ENCODE measurements at regions of chr4 and their contacts with region 1.

Region 1: DNA sequence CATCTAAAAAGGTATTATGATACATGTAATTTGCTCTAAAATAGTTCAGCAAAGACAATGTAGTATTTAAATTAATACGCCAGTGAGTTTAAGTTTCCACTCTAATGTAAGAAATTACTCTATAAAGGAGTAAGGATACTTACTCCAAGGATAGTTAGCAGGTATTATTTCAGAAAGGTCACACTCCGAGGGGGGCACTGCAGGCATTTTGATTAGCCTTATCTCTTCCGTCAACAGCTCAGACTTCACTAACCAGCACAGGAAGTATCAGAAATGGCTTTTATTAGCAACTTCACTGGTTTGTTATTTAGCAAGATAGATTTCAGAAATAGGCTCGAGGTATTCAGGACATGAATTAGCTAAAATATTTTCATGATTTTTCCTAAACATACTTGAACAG is 127.0 kb downstream of the COX18 start:
- DNase-seq: no peak
- H3K4me3 ChIP-seq: no peak overlapping the region
- CTCF ChIP-seq: no peak

Region 2: DNA sequence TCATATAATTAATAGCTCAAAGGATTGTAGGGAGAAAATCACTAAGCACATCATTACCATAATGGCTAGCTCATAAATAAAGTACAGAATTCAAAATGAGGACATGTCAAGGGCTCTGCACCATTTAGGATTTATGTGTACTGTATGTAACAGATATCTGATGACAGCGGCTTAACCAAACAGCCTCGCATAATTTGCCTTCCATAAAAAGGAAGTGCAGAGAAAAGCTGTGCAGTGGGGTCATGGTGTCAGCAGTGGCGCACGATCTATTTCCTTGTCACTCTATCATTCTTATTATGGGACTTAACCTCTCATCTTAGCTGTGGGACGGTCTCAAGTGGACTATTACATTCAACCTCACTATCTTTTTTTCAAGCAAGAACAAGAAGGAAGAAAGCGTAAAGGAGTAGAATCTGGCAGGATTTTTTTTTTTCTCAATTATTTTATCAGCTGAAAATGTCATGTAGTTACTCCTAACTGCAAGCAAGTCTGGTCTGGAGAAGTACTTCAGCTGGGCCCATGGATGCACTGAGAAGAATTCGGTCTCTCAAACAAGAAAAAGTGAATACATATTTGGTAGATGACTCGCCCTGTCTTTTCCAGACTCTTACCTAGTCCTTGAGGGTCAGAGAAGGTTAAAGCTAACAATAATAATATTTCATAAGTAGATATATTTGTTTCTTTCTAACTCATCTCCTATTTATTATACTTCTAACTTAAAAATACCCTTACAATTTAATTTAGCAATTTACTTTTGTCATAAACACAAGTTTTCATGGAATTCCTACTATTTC is 32.3 kb after region 1 on chr4:
- in situ Hi-C with region 1: loop called (anchors 5 kb)
- DNase-seq: no peak
- H3K4me3 ChIP-seq: no peak overlapping the region
- CTCF ChIP-seq: no peak

Measured in astrocyte of the cerebellum (primary cell).